Heart left ventricle (tissue), 16 donors: ENCODE measurements at regions of chr5 and their contacts with region 1.

Region 1: DNA sequence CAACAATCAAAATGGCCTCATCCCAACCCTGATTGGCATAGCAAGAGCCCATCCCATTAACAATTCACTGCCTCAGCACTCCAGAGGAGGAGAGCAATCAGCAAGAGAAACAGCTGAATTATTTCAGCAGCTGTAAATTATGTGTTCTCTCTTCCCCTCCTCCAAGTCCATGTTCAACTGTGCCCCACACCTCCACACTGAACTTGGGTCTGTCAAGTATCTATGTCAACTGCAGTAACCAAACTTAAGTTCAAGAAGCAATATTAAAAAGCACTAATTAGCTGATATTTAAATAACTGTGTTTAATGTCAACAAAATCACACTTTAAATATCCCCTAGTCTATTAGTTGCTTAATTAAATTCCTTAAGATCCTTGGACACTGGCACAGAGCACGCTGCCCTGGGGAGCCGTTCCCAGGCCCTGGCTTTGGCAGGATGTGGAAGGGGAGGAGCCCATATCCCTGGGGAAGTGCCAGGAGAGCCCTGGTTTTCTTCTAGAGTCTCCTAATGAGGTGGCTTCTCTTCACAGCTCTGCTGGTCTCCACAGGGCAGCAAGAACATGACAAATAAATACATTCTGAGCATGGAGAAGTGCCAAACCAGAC is 50.6 kb downstream of the SIL1 start:
- DNase-seq: peak in 4 of 5 donors; percentile 60 to 79 (median 65)
- ATAC-seq: peak; percentile 77 to 92 (median 88)
- H3K4me3 ChIP-seq: no peak overlapping the region
- H3K27ac ChIP-seq: peak overlapping the region in 5 of 12 donors; percentile 7 to 60 (median 11)
- H3K4me1 ChIP-seq: peaks cover 2 to 54% (median 43%) of the 10 kb centered on the region in 12 donors
- H3K27me3 ChIP-seq: no peaks in the 10 kb centered on the region
- CTCF ChIP-seq: no peak
- POLR2A ChIP-seq: no peak

Region 2: GRCh38 chr5:138449501-138450239 is 697.9 kb before region 1 on chr5:
- intact Hi-C with region 1: no loop called
- DNase-seq: peak; percentile 87 to 92 (median 89)
- ATAC-seq: peak; percentile 83 to 94 (median 92)
- H3K4me3 ChIP-seq: peak overlapping the region in 1 of 12 donors; percentile 16
- H3K27ac ChIP-seq: no peak overlapping the region
- H3K4me1 ChIP-seq: peaks cover 0 to 10% (median 7%) of the 10 kb centered on the region in 12 donors
- H3K27me3 ChIP-seq: no peaks in the 10 kb centered on the region
- CTCF ChIP-seq: peak; percentile 93 to 97 (median 96)
- POLR2A ChIP-seq: no peak

Region 3: DNA sequence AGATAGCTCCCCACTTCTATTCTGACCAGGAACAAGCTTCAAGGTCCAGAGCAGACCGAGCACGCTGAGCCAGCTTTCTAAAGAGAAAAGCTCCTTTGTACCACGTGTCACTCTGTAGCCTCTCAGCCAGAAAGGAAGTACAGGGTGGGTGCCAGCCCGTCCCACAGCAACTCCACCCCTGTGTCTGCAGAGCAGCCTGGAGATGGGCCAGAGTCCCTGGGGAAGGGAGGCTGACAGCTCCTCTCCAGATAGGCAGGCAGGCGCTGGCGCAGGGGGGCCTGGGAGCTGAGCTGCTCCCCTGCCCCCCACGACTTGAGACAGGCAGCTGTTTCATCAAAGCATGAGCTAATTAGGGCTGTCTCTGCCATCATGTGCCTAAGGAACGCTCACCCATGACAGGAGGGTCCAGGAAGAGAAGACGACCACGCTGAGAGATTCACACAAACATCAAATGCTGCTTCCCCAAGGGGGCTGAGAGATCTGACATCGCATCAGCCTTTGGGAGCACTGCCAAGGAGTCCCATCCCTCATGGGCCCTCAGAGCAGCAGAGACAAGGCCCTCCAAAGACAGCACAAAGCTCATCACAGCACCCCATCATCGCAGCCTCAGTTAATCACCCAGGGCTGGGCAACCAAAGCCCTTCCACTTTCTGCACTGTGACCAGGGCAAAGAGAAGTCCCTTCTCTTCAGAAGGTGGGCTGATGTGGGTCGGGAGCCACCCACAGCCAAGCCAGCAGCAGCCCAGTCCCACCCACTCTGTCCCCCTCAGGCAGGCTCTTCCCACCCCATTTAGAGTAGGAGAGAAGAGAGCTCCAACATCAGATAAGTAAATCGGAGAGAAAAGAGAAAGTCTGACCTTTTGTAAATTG is 194.0 kb before region 1 on chr5:
- intact Hi-C with region 1: loop called in 1 of 10 experiments (anchors 10 kb)
- DNase-seq: peak; percentile 92 to 97 (median 93)
- ATAC-seq: peak; percentile 92 to 96 (median 94)
- H3K4me3 ChIP-seq: no peak overlapping the region
- H3K27ac ChIP-seq: peak overlapping the region; percentile 57 to 92 (median 84)
- H3K4me1 ChIP-seq: peaks cover 21 to 76% (median 57%) of the 10 kb centered on the region in 12 donors
- H3K27me3 ChIP-seq: no peaks in the 10 kb centered on the region
- CTCF ChIP-seq: no peak
- POLR2A ChIP-seq: no peak